ENCODE measurements at regions of chr2 and their contacts with region 1.

Region 1: GRCh38 chr2:17181051-17181752 is 337.0 kb downstream of the RAD51AP2 start:
- DNase-seq: no peak
- H3K4me3 ChIP-seq: no peak overlapping the region
- CTCF ChIP-seq: no peak

Region 2: DNA sequence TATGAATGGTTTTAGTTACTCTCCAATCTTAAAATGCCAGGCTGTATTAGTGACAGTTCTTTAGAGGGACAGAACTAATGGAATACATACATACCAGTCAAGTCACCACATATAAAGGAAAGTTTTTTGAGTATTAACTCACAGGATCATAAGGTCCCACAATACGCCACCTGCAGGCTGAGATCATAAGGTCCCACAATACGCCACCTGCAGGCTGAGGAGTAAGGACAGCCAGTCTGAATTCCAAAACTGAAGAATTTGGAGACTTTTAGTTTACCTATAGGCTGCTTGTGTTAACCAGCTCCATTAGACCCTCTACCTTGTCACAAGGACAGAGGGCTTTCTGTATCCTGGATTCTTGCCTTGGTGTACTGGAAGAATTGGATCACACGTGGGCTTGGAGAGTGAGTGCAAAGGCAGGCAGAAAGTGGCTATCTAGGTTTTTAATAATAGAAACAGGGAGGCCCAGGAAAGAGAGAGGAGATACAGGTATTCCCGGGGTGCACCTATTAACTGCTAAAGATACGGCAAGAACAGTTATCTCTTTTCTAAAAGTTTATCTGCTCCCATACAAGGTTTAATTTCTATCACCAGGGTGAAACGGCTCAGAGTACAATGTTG is 280.7 kb before region 1 on chr2:
- in situ Hi-C with region 1: no loop called
- DNase-seq: no peak
- H3K4me3 ChIP-seq: no peak overlapping the region
- CTCF ChIP-seq: peak; percentile 42

Region 3: DNA sequence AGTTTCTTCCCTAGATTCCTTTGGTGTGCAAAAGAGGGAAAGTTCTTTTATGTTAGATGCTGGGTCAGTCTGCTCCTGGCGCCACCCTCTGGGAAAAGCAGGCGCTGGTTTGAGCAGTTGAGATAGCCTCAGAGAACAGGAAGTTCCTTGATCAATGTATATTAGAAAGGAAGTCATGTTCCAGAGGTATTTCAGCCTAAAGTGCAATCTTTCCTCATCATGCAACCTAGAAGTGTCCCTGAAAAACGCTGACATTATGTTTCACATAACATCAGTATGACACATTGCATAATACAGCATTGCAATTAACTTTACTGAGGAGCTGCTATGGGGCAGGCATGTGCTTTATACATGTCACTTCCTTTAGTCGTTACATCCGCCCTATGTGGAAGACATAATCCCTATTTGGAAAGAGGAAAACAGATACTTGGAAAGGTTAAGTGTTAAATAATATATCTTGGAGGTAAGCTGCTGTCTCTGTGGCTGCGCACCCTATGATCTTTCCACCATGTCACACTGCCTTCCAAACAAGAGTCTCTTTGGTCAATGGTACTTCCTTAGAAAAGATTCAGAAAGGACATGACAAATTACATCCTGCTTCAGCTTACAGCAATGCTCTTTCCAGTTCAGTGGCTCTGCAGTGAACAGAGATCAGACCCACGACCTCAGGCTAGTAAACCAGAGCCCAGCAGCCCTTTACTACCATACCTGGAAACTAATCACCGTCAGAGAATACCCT is 32.6 kb before region 1 on chr2:
- in situ Hi-C with region 1: loop called (anchors 5 kb)
- DNase-seq: no peak
- H3K4me3 ChIP-seq: no peak overlapping the region
- CTCF ChIP-seq: peak; percentile 72

Region 4: DNA sequence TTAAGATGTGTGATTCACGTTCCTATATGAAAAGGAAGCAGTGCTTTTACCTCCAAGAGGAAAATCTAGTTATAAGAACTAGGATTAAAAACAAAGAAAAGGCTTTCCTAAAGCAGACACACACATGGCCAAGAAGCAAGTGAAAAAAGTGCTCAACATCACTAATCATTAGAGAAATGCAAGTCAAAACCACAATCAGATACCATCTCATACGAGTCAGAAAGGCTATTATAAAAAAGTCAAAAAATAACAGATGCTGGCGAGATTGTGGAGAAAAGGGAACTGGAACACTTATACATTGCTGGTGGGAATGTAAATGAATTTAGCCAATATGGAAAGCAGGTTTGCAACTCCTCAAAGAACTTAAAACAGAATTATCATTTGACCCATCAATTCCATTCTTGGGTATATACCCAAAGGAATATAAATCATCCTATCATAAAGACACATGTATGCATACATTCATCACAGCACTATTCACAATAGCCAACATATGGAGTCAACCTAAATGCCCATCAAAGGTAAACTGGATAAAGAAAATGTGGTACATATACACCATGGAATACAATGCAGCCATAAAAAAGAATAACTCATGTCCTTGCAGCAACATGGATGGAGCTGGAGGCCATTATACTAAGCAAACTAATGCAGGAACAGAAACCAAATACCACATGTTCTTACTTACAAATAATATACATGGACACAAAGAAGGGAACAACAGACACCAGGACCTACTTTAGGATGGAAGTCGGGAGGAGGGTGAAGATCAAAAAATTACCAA is 51.8 kb after region 1 on chr2:
- in situ Hi-C with region 1: no loop called
- DNase-seq: peak; percentile 1
- H3K4me3 ChIP-seq: no peak overlapping the region
- CTCF ChIP-seq: no peak